HCT116 (cell line): ENCODE measurements at regions of chr15 and their contacts with region 1.

Region 1: DNA sequence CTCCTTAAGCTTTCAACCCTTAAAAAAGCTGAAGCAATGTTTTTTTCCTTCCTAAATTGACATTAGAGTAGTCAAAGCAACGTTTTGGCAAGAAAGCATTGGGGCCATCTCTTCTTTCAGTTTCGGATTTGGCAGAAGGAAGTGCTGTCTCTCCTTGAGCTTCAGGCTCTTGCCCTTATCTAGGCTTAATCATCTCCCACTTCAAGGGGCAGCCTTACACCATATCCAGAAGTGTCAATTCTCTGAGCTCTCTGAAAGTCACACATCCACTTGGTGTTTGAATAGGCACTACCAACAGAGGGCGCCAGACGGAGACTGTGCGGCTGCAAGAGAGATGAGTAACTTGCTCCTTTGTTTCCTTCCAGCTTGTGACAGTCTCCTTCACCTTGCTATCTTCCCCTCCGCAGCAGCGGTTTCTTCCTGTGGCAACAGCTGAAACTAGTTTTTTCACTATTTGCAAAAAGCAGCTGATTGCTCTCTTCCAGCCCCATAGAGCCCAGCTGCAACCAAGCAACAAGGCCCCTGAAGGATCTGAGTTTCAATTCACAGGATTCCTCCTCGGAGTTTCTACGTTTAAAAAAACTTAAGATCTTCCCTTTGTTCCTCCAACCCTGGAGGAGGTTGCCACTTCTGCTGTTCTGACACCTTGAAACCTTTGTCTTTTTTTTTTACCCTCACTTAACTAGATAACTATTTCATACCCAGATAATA is 147.0 kb upstream of the SLCO3A1 start:
- DNase-seq: peak; percentile 49
- ATAC-seq: peak; percentile 90
- H3K4me3 ChIP-seq: no peak overlapping the region
- H3K27ac ChIP-seq: no peak overlapping the region
- H3K4me1 ChIP-seq: peaks cover 0 to 11% of the 10 kb centered on the region in 2 experiments; a peak in 2 of 4 replicates
- H3K27me3 ChIP-seq: peaks cover 20% of the 10 kb centered on the region; the same call in 1 of the 2 replicates
- CTCF ChIP-seq: peak; percentile 55 to 95 (median 95)
- POLR2A ChIP-seq: no peak
- RAD21 ChIP-seq: peak; percentile 59

Region 2: DNA sequence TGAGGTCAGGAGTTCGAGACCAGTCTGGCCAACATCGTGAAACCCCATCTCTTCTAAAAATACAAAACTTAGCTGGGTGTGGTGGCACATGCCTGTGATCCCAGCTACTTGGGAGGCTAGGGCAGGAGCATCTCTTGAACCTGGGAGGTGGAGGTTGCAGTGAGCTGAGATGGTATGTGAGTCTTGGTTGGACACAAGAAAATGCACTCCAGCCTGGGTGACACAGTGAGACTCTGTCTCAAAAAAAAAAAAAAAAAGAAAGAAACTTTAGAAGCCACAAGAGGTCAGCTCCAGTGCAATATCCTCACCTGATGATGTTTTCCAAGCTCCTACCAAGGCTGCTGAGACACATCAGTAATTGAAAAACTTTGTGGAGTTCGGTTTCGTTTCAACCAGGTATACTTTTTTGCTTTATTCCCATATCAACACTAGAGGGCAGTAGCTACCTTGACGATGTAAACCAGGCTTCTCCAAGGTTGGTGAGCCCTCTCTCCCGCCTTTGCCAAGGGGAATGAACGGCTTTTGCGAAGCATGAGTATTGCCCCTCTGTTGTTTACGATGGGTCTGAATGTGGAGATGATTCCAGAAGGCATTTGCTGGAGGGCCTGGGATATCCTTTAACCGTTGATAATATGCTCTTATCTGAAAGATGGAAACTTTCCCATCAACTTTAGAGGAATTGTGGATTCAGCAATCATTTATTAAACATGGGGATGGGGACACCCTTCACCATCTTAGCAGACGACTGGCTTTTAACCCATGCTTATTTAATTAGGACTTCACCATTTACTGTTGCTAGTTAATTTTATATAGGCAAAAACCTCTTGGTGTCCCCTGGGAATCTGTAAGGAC is 403.7 kb before region 1 on chr15:
- CTCF ChIA-PET with region 1: interaction called, 4 read pairs
- POLR2A ChIA-PET with region 1: no interaction called
- RAD21 ChIA-PET with region 1: no interaction called
- intact Hi-C with region 1: loop called (anchors 1 kb)
- DNase-seq: peak; percentile 51
- ATAC-seq: peak; percentile 89
- H3K4me3 ChIP-seq: no peak overlapping the region
- H3K27ac ChIP-seq: no peak overlapping the region
- H3K4me1 ChIP-seq: no peaks in the 10 kb centered on the region
- H3K27me3 ChIP-seq: peaks cover 74% of the 10 kb centered on the region
- CTCF ChIP-seq: peak; percentile 67 to 78 (median 75)
- POLR2A ChIP-seq: no peak
- RAD21 ChIP-seq: peak; percentile 87

Region 3: GRCh38 chr15:91660174-91660653 is 46.3 kb before region 1 on chr15:
- CTCF ChIA-PET with region 1: no interaction called
- POLR2A ChIA-PET with region 1: no interaction called
- RAD21 ChIA-PET with region 1: no interaction called
- intact Hi-C with region 1: no loop called
- DNase-seq: no peak
- ATAC-seq: peak; percentile 58; the same call in 1 of the 2 replicates
- H3K4me3 ChIP-seq: no peak overlapping the region
- H3K27ac ChIP-seq: no peak overlapping the region
- H3K4me1 ChIP-seq: no peaks in the 10 kb centered on the region
- H3K27me3 ChIP-seq: peaks cover 23% of the 10 kb centered on the region; the same call in 1 of the 2 replicates
- CTCF ChIP-seq: peak in 2 of 3 experiments; percentile 9 to 27; a peak in 2 of 6 replicates
- POLR2A ChIP-seq: no peak
- RAD21 ChIP-seq: no peak

Region 4: GRCh38 chr15:91981821-91982801 is 275.6 kb after region 1 on chr15:
- CTCF ChIA-PET with region 1: no interaction called
- POLR2A ChIA-PET with region 1: no interaction called
- RAD21 ChIA-PET with region 1: no interaction called
- intact Hi-C with region 1: loop called (anchors 5 kb)
- DNase-seq: no peak
- ATAC-seq: no peak
- H3K4me3 ChIP-seq: no peak overlapping the region
- H3K27ac ChIP-seq: no peak overlapping the region
- H3K4me1 ChIP-seq: no peaks in the 10 kb centered on the region
- H3K27me3 ChIP-seq: no peaks in the 10 kb centered on the region; the same call in none of the 2 replicates
- CTCF ChIP-seq: 0 out of 6 replicates have a peak, but pooled peaks of 1 of the 3 experiments have one; percentile 10
- POLR2A ChIP-seq: no peak
- RAD21 ChIP-seq: peak; percentile 60